ENCODE measurements at regions of chr17 and their contacts with region 1.

Region 1: DNA sequence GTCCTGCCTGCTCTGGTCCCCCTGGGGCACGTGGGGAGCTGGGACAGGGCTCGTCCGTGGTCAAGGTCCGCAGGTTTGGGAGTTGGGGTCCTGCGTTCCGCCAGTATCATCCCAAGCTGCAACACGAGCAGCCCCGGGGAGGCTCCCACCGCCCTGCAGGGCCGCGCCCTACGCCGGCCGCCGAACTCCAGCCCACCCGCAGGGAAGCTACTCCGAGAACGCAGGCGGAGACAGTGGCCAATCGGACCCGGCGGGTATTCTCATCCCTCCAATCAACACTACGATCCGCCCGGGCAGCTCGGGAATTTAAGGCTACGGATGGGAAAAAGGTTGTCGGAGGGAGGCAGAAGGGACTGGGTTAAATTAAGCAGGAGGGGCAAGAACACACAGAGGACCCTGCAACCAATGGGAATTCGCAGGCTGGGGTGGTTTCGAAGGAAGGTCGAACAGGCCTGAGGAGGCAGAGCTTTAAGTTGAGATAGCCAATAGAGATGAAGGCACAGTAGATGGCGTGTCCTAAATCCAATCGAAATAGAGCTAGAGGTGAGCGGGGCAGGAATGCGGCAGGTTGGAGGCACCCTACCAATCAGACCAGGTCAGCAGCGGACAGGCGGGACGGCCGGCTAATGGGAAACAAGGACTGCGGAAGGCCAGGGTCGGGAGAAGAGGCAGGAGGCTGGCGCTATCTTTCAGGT is 626 bp downstream of the SPAG7 start:
- DNase-seq: peak; percentile 95
- H3K4me3 Mint-ChIP-seq: no peak overlapping the region
- H3K27ac Mint-ChIP-seq: no peak overlapping the region
- H3K4me1 Mint-ChIP-seq: peaks cover 40% of the 10 kb centered on the region
- H3K27me3 Mint-ChIP-seq: no peaks in the 10 kb centered on the region

Region 2: GRCh38 chr17:4375039-4375748 is 591.8 kb before region 1 on chr17:
- intact Hi-C with region 1: no loop called
- DNase-seq: peak; percentile 60
- H3K4me3 Mint-ChIP-seq: peak overlapping the region; percentile 60
- H3K27ac Mint-ChIP-seq: peak overlapping the region; percentile 89
- H3K4me1 Mint-ChIP-seq: peaks cover 32% of the 10 kb centered on the region
- H3K27me3 Mint-ChIP-seq: no peaks in the 10 kb centered on the region

Region 3: GRCh38 chr17:4709794-4710692 is 256.9 kb before region 1 on chr17 and contains the start of gene ARRB2:
- intact Hi-C with region 1: loop called (anchors 1 kb)
- DNase-seq: peak; percentile 99
- H3K4me3 Mint-ChIP-seq: peak within 1 kb of the TSS; percentile 98
- H3K27ac Mint-ChIP-seq: peak within 1 kb of the TSS; percentile 99
- H3K4me1 Mint-ChIP-seq: peaks cover 54% of the 10 kb centered on the region
- H3K27me3 Mint-ChIP-seq: no peaks in the 10 kb centered on the region
- total RNA-seq, gene ARRB2: 202 and 204 TPM in 2 replicates

Region 4: DNA sequence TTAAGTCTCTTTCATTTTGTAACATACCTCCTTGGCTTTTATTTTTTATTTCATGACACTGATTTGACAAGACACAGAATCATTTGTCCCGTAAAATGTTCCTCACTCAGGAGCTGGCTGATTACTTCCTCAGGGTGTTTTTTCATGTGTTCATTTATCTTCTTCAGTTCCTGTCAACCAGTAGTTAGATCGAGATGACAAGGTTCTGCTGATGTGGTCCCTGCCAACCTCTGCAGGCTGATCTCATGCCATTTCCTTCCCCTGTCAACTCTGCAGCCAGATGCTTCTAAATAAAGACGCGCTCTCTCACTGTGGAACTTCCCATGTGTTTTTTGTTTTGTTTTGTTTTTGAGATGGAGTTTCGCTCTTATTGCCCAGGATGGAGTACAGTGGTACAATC is 219.1 kb before region 1 on chr17:
- intact Hi-C with region 1: no loop called
- DNase-seq: peak; percentile 47
- H3K4me3 Mint-ChIP-seq: peak overlapping the region; percentile 72
- H3K27ac Mint-ChIP-seq: peak overlapping the region; percentile 81
- H3K4me1 Mint-ChIP-seq: peaks cover 21% of the 10 kb centered on the region
- H3K27me3 Mint-ChIP-seq: peaks cover 13% of the 10 kb centered on the region

Region 5: DNA sequence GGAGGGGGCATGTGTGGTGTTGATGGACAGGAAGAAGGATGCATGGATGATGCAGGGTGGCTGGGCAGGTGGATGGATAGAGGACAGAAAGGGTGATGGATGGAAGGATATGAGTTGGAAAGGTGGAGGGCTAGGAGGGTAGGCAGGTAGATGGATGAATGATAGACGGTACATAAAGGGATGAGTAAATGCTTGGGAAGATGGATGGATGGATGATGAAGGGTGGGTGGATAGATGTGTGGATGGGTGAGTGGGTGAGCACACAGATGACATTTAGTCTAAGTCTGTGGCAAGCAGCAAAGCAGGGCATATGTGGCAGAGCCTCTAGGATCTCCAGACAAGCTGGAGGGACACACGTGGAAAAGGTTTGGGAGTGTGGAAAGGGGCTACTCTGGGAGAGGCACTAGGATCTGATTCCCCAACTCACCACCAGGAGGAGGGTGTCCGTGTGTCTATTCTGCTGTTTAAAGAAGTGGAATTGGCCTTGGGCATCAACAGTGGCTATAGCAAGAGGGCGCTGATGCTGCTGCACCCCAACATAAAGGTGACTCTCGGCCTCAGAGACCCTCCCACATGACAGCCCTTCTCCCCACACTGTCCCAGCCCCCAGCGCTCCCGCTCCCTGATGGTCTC is 151.8 kb before region 1 on chr17:
- intact Hi-C with region 1: no loop called
- DNase-seq: no peak
- H3K4me3 Mint-ChIP-seq: no peak overlapping the region
- H3K27ac Mint-ChIP-seq: no peak overlapping the region
- H3K4me1 Mint-ChIP-seq: peaks cover 5% of the 10 kb centered on the region
- H3K27me3 Mint-ChIP-seq: no peaks in the 10 kb centered on the region

Region 6: DNA sequence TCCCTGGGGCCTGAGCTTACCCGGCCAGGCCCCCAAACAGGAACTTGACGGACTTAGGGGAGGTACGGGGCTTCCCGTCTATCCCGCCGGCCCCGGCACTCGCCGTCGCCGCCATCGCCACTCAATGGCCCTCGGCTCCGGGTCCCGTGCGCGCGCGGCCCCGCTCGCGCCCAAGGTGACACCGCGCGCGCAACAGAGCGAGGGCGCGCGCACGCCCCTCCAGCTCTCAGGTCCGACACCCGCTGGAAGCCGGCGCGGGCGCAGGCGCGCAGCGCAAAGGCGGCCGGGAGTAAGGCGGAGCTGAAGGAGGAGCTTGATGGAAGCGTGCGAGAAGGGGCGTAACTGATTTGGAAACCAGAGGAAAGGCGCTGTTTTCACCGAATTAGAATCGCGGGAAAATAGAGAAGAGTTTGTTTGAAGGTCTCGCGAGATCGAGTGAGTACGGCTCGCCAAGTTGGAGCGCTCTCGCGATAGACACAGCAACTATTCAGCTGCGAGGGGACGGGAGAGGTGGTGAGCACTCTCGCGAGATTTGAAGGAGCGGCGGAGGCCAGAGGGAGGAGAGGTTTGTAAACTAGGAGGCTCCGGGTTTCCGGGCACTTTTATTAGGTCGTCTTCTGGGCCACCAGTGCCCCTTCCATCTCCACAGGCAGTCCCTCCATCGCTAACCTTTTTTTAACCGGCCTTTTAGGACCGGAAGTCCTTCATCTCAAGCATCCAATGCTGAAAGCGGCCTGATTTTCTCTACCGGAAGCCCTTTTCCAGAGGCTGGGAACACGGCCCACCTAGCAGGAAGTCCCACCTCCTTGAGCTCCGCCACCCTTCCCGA is 27.0 kb before region 1 on chr17 and contains the starts of genes RNF167 and SLC25A11:
- intact Hi-C with region 1: loop called (anchors 1 kb)
- DNase-seq: peak; percentile 98
- H3K4me3 Mint-ChIP-seq: peak within 1 kb of the TSS; percentile 100
- H3K27ac Mint-ChIP-seq: peak within 1 kb of the TSS; percentile 94
- H3K4me1 Mint-ChIP-seq: peaks cover 56% of the 10 kb centered on the region
- H3K27me3 Mint-ChIP-seq: no peaks in the 10 kb centered on the region
- total RNA-seq, gene RNF167: 138 and 140 TPM in 2 replicates
- total RNA-seq, gene SLC25A11: 111 and 116 TPM in 2 replicates

Region 7: DNA sequence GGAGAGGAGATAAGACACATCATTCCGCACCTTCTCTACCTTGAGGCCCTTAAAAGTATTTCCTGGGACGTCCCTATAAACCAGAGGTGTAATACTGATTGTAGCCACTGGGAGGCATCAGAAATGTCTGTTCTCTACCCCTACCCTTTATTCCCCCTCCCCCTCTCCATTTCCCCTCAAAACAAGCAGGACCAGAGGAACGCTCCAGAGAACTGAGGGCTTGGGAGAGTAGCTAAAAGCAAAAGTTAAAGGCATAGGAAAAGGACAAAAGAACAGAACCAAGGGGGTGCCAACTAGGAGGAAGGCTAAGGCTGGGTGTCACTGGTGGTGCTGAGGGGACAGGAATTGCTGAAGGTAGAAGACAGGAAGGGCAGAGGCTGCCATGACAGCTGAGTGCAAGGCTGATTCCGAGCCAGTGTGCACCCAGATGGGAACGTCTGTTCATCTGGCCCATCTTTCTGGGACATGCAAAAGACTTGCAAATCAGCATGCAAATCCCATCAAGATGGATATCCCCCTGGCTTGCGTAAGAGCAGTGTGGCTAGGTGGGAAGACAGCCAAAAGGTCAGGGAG is 13.7 kb after region 1 on chr17:
- intact Hi-C with region 1: loop called (anchors 1 kb)
- DNase-seq: peak; percentile 42
- H3K4me3 Mint-ChIP-seq: no peak overlapping the region
- H3K27ac Mint-ChIP-seq: peak overlapping the region; percentile 56
- H3K4me1 Mint-ChIP-seq: peaks cover 20% of the 10 kb centered on the region
- H3K27me3 Mint-ChIP-seq: no peaks in the 10 kb centered on the region

Region 8: GRCh38 chr17:4997302-4998026 is 30.5 kb after region 1 on chr17 and contains the starts of genes INCA1 and KIF1C:
- intact Hi-C with region 1: loop called (anchors 1 kb)
- DNase-seq: peak; percentile 89
- H3K4me3 Mint-ChIP-seq: peak within 1 kb of the TSS; percentile 90
- H3K27ac Mint-ChIP-seq: peak within 1 kb of the TSS; percentile 90
- H3K4me1 Mint-ChIP-seq: peaks cover 19% of the 10 kb centered on the region
- H3K27me3 Mint-ChIP-seq: peaks cover 8% of the 10 kb centered on the region
- total RNA-seq, gene INCA1: 0.34 and 0.37 TPM in 2 replicates
- total RNA-seq, gene KIF1C: 68.4 and 71.3 TPM in 2 replicates

Region 9: DNA sequence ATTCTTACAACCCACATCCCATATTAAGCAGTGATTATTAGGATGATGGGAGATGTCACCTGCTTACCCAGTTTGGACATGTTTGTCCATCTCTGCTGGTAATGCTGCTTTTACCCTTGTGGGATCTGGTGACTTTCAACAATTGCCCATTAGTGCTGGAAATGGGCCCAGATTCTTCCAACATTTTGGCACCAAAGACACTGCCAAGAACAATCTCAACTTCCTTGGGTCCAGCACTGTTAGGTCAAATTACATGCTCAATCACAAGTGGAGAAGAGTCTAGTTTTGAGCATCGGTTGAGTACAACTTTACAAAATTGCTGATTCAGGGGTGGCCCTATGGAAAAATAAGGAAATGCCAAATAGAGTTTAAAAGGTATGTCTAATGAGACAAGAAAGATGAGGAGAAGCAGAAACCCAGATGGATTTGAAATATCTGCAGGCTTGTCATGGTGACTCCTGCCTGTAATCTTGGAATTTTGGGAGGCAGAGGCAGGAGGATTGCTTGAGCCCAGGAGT is 98.3 kb after region 1 on chr17:
- intact Hi-C with region 1: loop called (anchors 1 kb)
- DNase-seq: no peak
- H3K4me3 Mint-ChIP-seq: no peak overlapping the region
- H3K27ac Mint-ChIP-seq: peak overlapping the region; percentile 30
- H3K4me1 Mint-ChIP-seq: peaks cover 9% of the 10 kb centered on the region
- H3K27me3 Mint-ChIP-seq: peaks cover 4% of the 10 kb centered on the region

Measured in activated T-helper 1 cell treated with anti-CD3 and anti-CD28 coated beads, Interleukin-12 subunit alpha, Interleukin-12 subunit beta, Interleukin-2, Interleukin-4 antibody, amounts not matched to agents 30 ng/mL and 10 ng/mL and 1 ng/mL, durations not matched to agents 14 hours and 24 hours and 36 hours (primary cell).